G401 (cell line): ENCODE measurements at regions of chr3 and their contacts with region 1.

Region 1: GRCh38 chr3:32177702-32178198 is 60.7 kb upstream of the CMTM8 start:
- DNase-seq: peak; percentile 57

Region 2: DNA sequence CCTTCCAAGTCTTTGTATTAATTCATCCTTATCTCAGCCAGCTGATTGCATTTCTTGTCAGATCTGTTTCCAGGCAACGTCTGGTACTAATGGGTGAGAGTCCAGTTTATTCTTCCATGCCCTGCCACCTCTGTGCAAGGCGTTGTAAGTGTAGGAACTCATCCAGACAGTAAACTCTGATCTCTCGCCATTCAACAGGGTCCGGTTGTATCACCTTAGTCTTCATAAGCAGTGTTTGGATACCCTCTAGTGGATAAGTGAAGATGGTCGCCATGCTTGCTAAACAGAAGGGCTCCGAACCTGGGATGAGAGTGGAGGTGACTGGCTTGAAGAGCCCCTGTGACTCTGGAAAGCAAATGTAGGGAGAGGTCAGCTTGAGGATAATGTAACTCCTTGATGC is 162.3 kb after region 1 on chr3:
- in situ Hi-C with region 1: loop called (anchors 10 kb)
- DNase-seq: peak; percentile 86